ENCODE measurements at regions of chr19 and their contacts with region 1.

Region 1: DNA sequence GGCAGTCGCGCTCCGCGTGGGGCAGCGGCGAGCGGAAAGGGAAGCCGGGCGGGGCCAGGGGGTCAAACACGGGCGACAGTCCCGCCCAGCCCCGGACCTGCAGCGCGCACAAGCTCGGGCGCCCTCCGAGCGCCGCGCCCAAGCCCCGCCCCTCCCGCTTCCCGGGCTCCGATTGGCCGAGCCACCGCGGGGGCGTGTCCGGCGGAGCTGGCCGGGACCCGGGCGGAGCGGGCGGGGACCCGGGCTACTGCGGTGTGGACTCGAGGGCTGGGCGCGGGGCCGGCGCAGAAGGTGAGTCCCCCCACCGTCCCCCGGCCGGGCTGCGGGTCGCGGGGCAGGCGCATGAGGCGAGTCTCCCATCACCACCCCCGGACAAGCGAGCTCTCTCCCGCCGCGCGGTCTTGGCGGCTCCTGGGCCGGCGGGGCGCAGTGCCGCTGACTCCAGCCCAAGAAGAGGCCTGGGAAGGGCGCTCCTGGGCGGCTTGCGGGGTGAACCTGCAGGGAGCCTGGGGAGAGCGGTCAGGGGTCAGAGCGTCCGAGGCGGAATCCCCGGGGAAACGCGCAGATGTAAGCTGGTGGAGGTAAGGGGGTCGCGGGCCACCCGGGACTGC is at the start of gene PLEKHF1:
- DNase-seq: peak; percentile 85
- H3K4me3 Mint-ChIP-seq: peak within 1 kb of the TSS; percentile 97
- H3K27ac Mint-ChIP-seq: peak within 1 kb of the TSS; percentile 96
- H3K4me1 Mint-ChIP-seq: peaks cover 71% of the 10 kb centered on the region
- H3K27me3 Mint-ChIP-seq: no peaks in the 10 kb centered on the region
- total RNA-seq, gene PLEKHF1: 20.7 to 21.0 TPM

Region 2: GRCh38 chr19:27793644-27794493 is 1871.5 kb before region 1 on chr19:
- CTCF ChIA-PET with region 1: no interaction called
- intact Hi-C with region 1: loop called (anchors 10 kb)
- DNase-seq: peak; percentile 94
- H3K4me3 Mint-ChIP-seq: peak overlapping the region; percentile 85
- H3K27ac Mint-ChIP-seq: peak overlapping the region; percentile 89
- H3K4me1 Mint-ChIP-seq: peaks cover 16% of the 10 kb centered on the region
- H3K27me3 Mint-ChIP-seq: no peaks in the 10 kb centered on the region

Region 3: DNA sequence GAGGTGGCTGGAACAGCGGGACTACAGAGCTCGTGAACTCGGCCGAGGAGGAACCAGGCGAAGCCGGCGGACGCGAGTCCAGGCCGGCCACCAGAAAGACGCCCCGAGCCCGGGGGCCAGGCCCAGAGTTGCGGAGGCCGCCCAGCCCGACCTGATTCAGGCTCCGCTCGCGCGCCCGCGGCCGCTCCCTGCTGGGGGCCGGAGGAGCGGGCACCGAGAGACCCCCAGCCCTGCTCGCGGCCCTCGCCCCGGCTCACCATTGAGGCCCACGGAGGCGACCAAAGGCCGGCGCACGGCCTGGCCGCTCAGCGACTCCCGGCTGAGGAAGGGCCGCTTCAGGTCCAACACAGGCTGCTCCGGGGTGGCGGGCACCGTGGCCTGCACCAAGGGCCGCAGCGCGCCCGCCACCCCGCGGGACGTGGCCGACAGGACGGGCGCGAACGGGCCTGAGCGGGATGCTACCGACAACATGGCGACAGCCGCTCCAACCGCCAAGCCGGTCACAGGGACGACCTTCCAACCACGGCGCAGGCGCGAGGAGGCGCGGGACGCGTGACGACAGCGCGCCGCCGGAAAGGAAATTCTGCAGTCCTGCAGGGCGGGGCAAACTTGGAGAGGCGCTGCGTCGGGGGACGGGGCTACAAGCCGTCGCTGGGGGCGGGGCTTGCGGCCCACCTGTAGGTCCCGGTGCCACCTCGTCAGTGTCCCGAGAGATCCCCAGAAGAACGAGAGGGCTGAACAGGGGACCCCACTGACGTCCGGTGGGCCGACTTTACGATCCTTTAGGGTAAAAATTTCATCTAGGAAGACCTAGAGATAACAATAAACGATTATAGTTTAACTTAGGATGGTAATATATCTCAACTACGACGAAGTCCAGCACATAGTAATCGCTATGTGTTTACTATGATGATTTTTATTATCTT is 452.4 kb before region 1 on chr19 and contains the start of gene UQCRFS1:
- CTCF ChIA-PET with region 1: no interaction called
- intact Hi-C with region 1: loop called (anchors 5 kb)
- DNase-seq: peak; percentile 97
- H3K4me3 Mint-ChIP-seq: peak within 1 kb of the TSS; percentile 96
- H3K27ac Mint-ChIP-seq: peak within 1 kb of the TSS; percentile 96
- H3K4me1 Mint-ChIP-seq: peaks cover 40% of the 10 kb centered on the region
- H3K27me3 Mint-ChIP-seq: no peaks in the 10 kb centered on the region
- total RNA-seq, gene UQCRFS1: 46.8 to 47.6 TPM

Region 4: GRCh38 chr19:29680447-29680846 is 15.1 kb after region 1 on chr19:
- CTCF ChIA-PET with region 1: interaction called, 8 read pairs
- intact Hi-C with region 1: loop called (anchors 2 kb)
- DNase-seq: peak; percentile 95
- H3K4me3 Mint-ChIP-seq: peak overlapping the region; percentile 66
- H3K27ac Mint-ChIP-seq: peak overlapping the region; percentile 91
- H3K4me1 Mint-ChIP-seq: peaks cover 53% of the 10 kb centered on the region
- H3K27me3 Mint-ChIP-seq: no peaks in the 10 kb centered on the region

Region 5: DNA sequence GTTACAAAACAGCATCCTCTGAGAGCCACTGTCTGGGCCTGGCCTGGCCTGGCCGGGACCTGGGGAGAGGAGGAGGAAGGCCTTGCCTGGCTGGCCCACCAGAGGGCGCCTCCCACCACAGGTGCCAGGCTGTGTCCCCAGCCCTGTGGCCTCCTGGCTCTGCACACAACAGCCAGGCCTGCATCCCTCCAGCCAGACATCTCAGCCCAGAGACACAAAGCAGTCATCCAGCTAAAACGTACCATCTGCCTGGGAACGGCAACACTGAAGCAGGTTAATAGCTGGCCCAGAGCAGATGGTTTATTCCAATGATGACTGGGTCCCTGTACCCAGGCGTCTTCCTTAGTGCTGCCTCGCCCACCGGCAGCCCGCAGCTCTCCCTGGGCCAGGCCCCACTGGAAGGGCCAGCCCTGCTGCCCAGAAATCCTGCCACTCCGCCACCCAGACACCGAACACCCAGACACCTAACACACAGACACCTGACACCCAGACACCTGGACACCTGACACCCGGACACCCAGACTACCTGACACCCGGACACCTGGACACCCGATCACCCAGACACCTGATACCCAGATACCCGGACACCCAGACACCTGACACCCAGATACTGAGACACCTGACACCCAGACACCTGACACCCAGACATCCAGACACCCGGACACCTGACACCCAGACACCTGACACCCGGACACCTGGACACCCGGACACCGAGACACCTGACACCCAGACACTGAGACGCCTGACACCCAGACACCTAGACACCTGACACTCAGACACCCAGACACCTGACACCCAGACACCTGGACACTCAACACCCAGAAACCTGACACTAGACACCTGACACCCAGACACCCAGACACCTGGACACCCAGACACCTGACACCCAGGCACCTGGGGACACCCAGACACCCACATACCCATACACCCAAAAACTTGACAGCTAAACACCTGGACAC is 29.6 kb after region 1 on chr19:
- CTCF ChIA-PET with region 1: interaction called, 13 read pairs
- intact Hi-C with region 1: loop called (anchors 1 kb)
- DNase-seq: peak; percentile 88
- H3K4me3 Mint-ChIP-seq: no peak overlapping the region
- H3K27ac Mint-ChIP-seq: no peak overlapping the region
- H3K4me1 Mint-ChIP-seq: peaks cover 11% of the 10 kb centered on the region
- H3K27me3 Mint-ChIP-seq: no peaks in the 10 kb centered on the region

Region 6: DNA sequence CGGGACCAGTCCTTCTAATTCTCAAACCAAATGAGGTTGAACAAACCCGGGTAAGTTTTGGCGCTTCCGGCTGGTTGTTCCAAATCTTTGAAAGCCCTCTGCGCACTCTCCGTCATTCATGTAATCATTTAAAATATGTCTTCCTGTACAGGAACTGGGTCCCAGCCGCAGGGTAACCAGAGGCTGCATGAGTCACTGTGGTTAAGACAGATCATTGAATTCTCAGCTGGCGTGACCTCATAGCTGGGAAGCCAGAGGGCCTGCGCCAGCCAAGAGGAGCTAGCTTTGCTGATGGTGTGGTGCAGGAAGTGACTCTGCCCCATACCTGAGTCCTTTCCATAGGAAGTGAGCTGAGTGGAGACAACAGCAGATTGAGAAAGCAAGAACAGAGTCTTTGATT is 1548.8 kb after region 1 on chr19:
- CTCF ChIA-PET with region 1: no interaction called
- intact Hi-C with region 1: loop called (anchors 10 kb)
- DNase-seq: peak; percentile 97
- H3K4me3 Mint-ChIP-seq: peak overlapping the region; percentile 60
- H3K27ac Mint-ChIP-seq: peak overlapping the region; percentile 99
- H3K4me1 Mint-ChIP-seq: peaks cover 40% of the 10 kb centered on the region
- H3K27me3 Mint-ChIP-seq: no peaks in the 10 kb centered on the region

Measured in activated naive CD4-positive, alpha-beta T cell treated with anti-CD3 and anti-CD28 coated beads for 36 hours (primary cell).